PC-3 (cell line): ENCODE measurements at regions of chrX and their contacts with region 1.

Region 1: GRCh38 chrX:12080265-12080664 is 58.0 kb upstream of the FRMPD4 start:
- DNase-seq: peak; percentile 71
- ATAC-seq: no peak
- H3K4me3 ChIP-seq: no peak overlapping the region
- H3K27ac ChIP-seq: no peak overlapping the region
- H3K4me1 ChIP-seq: no peaks in the 10 kb centered on the region
- H3K27me3 ChIP-seq: no peaks in the 10 kb centered on the region
- CTCF ChIP-seq: peak; percentile 82

Region 2: DNA sequence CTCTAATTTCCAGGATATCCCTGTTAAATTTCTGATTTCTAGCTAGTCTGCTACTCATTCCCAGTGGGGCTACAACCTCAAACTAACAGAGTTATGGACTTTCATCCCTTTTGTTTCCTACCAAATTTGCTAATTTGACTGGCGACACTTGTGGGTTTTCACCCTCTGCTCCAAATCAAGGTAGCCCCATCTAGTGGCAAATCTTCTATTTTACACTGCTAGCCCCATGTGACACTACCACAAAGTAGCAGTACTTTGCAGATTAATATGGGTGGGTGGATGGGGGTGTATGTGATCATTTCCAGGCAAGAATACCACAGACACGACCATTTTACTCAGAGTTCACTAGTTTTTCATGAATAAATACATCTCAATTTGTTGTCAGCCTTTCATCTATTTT is 171.9 kb before region 1 on chrX:
- CTCF ChIA-PET with region 1: no interaction called
- POLR2A ChIA-PET with region 1: no interaction called
- intact Hi-C with region 1: no loop called
- DNase-seq: peak; percentile 63
- ATAC-seq: peak; percentile 76
- H3K4me3 ChIP-seq: no peak overlapping the region
- H3K27ac ChIP-seq: no peak overlapping the region
- H3K4me1 ChIP-seq: no peaks in the 10 kb centered on the region
- H3K27me3 ChIP-seq: no peaks in the 10 kb centered on the region
- CTCF ChIP-seq: peak; percentile 73

Region 3: DNA sequence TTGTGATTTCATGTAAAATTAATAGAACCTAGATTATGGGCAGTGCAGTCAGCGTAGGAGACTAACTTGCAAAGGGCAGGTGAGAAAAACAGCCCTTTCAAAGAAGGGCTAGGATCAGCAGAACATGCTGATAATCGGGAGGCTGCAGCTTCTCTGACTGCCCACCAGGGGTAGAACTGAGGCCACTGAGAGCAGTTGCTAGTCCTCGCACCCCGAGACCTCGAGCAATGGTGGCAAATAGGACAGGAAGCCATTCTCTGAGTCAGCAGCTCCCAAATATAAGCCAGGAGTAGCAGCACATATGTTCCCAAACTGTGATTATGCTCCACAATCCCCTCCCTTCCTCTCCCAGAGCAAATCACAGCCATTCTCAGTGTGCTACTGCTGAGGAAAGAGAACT is 135.8 kb before region 1 on chrX:
- CTCF ChIA-PET with region 1: no interaction called
- POLR2A ChIA-PET with region 1: no interaction called
- intact Hi-C with region 1: loop called (anchors 5 kb)
- DNase-seq: peak; percentile 66
- ATAC-seq: peak; percentile 73
- H3K4me3 ChIP-seq: no peak overlapping the region
- H3K27ac ChIP-seq: no peak overlapping the region
- H3K4me1 ChIP-seq: peaks cover 6% of the 10 kb centered on the region
- H3K27me3 ChIP-seq: no peaks in the 10 kb centered on the region
- CTCF ChIP-seq: peak; percentile 68

Region 4: DNA sequence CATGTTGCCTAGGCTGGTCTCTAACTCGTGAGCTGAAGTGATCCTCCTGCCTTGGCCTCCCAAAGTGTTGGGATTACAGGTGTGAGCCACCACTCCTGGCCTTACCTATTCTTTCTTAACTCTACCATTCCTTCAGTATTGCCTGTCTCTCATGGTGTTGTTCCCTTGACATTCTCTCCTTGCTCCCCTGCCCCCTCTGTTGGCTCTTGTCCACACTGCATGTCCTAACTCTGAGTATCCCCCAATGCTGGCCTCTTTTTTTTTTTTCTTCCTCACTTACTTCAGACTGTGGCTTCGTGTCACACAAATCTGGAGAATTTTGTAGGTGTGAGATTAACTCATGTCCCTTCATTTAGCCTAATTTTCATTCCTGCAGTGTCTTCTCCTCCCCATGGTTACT is 35.1 kb after region 1 on chrX:
- CTCF ChIA-PET with region 1: no interaction called
- POLR2A ChIA-PET with region 1: no interaction called
- intact Hi-C with region 1: no loop called
- DNase-seq: peak; percentile 34
- ATAC-seq: no peak
- H3K4me3 ChIP-seq: no peak overlapping the region
- H3K27ac ChIP-seq: no peak overlapping the region
- H3K4me1 ChIP-seq: no peaks in the 10 kb centered on the region; the same call in 1 of the 2 replicates
- H3K27me3 ChIP-seq: no peaks in the 10 kb centered on the region
- CTCF ChIP-seq: peak; percentile 36; the same call in 1 of the 2 replicates

Region 5: GRCh38 chrX:12269484-12269883 is 189.2 kb after region 1 on chrX:
- CTCF ChIA-PET with region 1: no interaction called
- POLR2A ChIA-PET with region 1: no interaction called
- intact Hi-C with region 1: loop called (anchors 1 kb)
- DNase-seq: peak; percentile 34
- ATAC-seq: peak; percentile 40; the same call in 1 of the 2 replicates
- H3K4me3 ChIP-seq: no peak overlapping the region
- H3K27ac ChIP-seq: no peak overlapping the region
- H3K4me1 ChIP-seq: no peaks in the 10 kb centered on the region
- H3K27me3 ChIP-seq: no peaks in the 10 kb centered on the region
- CTCF ChIP-seq: peak; percentile 47

Region 6: DNA sequence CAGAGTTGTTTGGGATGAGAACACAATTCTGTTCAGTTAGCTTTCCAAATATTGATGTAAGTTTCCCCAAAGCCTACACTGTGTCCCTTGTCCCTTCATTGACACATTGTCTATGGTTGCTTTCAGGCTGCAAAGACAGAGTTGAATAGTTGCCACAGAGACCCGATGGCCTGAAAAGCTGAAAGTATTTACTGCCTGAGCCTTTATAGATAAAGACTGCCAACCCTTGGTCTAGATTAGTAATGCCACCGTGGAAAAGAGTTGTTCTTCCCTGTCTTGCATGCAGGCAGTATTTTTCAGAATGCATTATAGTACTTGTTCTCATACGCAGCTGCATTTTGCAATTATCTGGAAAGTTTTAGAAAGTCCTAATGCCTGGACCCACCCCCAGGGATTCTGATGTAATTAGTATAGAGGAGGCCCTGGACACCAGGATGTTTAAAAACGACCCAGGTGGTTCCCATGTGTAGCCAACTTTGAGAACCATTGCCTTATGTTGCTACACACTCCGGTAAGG is 238.8 kb after region 1 on chrX:
- CTCF ChIA-PET with region 1: no interaction called
- POLR2A ChIA-PET with region 1: no interaction called
- intact Hi-C with region 1: loop called (anchors 1 kb)
- DNase-seq: peak; percentile 32
- ATAC-seq: peak; percentile 51
- H3K4me3 ChIP-seq: no peak overlapping the region
- H3K27ac ChIP-seq: no peak overlapping the region
- H3K4me1 ChIP-seq: peaks cover 3% of the 10 kb centered on the region; the same call in 1 of the 2 replicates
- H3K27me3 ChIP-seq: no peaks in the 10 kb centered on the region
- CTCF ChIP-seq: peak; percentile 50

Region 7: DNA sequence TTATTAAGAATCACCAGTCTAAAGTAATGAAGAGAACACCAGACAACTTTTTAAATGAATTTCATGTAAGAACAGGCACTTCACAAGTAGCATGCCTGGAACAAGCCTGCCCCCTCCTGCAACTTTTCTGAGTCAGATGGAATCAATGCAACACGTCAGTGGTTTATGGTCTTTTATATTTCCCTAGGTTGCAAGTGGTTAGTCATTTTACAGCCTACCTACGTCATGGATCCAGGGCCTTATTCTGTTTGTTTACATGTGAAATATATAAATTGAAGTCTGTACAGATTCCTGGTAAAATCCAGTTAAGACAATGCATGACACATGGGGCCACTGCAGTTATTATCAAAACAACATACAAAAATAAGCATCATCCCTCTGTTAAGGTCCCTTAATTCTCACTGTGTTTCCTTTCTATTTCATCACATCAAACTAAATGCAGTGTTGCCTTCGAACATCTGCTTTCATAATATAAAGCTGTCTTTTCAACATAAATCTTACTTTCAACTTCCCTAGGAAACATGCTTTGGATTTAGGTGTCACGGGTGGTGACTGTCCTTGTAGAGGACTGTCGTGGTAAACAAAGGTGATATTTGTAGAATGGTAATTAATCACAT is 367.3 kb after region 1 on chrX:
- CTCF ChIA-PET with region 1: no interaction called
- POLR2A ChIA-PET with region 1: no interaction called
- intact Hi-C with region 1: loop called (anchors 2 kb)
- DNase-seq: peak; percentile 80
- ATAC-seq: peak; percentile 93
- H3K4me3 ChIP-seq: no peak overlapping the region
- H3K27ac ChIP-seq: peak overlapping the region; percentile 69
- H3K4me1 ChIP-seq: peaks cover 15% of the 10 kb centered on the region
- H3K27me3 ChIP-seq: no peaks in the 10 kb centered on the region
- CTCF ChIP-seq: peak; percentile 52

Region 8: GRCh38 chrX:12567857-12568256 is 487.6 kb after region 1 on chrX:
- CTCF ChIA-PET with region 1: interaction called, 3 read pairs
- POLR2A ChIA-PET with region 1: no interaction called
- intact Hi-C with region 1: loop called (anchors 10 kb)
- DNase-seq: peak; percentile 50
- ATAC-seq: no peak
- H3K4me3 ChIP-seq: no peak overlapping the region
- H3K27ac ChIP-seq: no peak overlapping the region
- H3K4me1 ChIP-seq: peaks cover 25% of the 10 kb centered on the region
- H3K27me3 ChIP-seq: no peaks in the 10 kb centered on the region
- CTCF ChIP-seq: peak; percentile 72